ENCODE measurements at regions of chr5 and their contacts with region 1.

Region 1: GRCh38 chr5:38551030-38552017 is 5.1 kb downstream of the LIFR start:
- DNase-seq: no peak

Region 2: DNA sequence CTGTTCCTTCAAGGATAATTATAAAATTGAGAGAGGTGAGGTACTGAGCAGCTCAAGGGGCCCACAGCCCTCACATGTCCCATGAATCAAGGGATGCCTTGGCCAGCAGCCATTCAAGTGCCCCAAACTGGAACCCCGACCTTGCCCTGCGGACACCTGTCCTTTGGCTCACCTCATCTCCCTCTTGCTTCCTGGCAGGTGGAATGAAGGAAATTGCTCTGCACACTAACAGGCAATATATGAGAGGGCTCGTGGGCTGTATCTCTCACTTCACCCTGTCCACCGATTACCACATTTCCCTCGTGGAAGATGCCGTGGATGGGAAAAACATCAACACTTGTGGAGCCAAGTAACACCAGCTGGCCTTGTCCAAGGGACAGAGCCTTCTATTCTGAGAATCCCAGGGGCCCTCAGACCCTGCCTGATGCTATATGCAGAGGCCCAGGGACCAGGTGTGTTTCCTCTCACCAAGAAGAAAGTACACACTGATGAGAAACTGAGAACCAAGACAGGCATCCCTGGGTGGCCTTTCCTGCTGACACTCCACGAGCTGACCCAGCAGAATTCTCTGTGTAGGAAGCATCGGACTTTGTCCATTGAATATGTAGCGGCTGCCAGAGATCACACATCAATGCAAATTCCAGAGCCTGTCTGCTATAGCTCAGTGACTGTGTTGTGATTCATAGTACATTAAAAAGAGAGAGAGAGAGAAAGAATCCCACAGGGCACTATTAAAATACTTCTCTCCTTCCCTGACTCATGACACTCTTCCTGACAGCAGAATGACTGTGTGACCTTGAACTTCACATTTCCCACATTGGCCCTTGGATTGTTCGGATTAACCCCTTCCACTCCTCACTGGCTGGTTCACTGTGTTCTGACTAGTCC is 87.4 kb before region 1 on chr5:
- intact Hi-C with region 1: loop called (anchors 5 kb)
- DNase-seq: no peak

Region 3: DNA sequence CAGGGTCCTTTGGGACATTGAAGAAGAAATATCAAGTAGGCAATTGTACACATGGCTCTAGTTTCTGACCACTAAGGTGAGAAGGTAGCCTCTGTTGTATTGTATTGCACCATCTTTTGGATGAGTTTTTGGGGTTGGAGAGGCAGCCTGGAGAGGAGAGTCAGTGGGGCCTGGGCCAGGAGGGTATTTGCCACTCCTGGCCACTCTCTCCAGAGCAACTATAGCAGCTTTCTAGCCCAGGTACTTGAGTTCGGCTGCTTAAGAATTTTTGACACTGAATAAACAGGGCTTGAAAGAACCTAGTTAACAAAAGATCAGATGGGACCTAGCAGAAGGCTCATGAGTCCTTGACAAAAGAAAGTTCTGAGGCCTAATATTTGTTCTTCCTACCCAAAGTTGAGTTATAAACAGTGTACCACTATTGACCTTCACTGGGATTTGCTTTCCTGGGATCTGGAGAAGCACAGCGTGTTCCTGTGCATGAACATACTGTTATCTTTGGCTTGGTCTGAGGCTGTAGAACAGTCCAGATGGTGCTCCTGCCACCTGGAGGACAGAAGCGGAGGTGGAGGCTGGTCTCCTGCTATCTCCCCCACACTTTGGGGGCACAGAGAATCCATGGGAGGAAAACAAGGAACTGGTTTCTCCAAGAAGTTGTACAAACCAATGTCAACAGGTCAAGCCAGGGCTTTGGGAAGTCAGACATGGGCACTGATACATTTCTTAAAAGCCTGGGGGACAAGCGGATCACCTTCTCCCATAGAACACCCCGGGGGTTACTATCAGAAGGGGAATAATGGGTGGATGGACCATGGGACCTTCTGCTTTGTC is 115.6 kb after region 1 on chr5:
- intact Hi-C with region 1: loop called (anchors 5 kb)
- DNase-seq: no peak